Natural killer cell (primary cell): ENCODE measurements at regions of chr19 and their contacts with region 1.

Region 1: GRCh38 chr19:10403137-10404021 is at the start of gene CDC37:
- DNase-seq: peak; percentile 99
- ATAC-seq: peak; percentile 59 to 89 (median 71)
- H3K4me3 ChIP-seq: peak within 1 kb of the TSS; percentile 83
- H3K4me3 Mint-ChIP-seq: peak within 1 kb of the TSS; percentile 94
- H3K27ac ChIP-seq: peak within 1 kb of the TSS; percentile 90
- H3K27ac Mint-ChIP-seq: peak within 1 kb of the TSS; percentile 97 to 98
- H3K4me1 ChIP-seq: peaks cover 73% of the 10 kb centered on the region
- H3K4me1 Mint-ChIP-seq: peaks cover 60 to 77% of the 10 kb centered on the region in 2 donors
- H3K27me3 ChIP-seq: no peaks in the 10 kb centered on the region
- H3K27me3 Mint-ChIP-seq: no peaks in the 10 kb centered on the region
- CTCF ChIP-seq: no peak
- total RNA-seq, gene CDC37: 211 to 242 (median 223) TPM

Region 2: GRCh38 chr19:10416380-10417257 is 13.2 kb after region 1 on chr19:
- intact Hi-C with region 1: loop called (anchors 1 kb)
- DNase-seq: peak; percentile 99 to 100
- ATAC-seq: peak; percentile 66 to 89 (median 76)
- H3K4me3 ChIP-seq: peak overlapping the region; percentile 48
- H3K4me3 Mint-ChIP-seq: peak overlapping the region; percentile 92
- H3K27ac ChIP-seq: peak overlapping the region; percentile 72
- H3K27ac Mint-ChIP-seq: peak overlapping the region; percentile 95 to 96
- H3K4me1 ChIP-seq: peaks cover 78% of the 10 kb centered on the region
- H3K4me1 Mint-ChIP-seq: peaks cover 46 to 61% of the 10 kb centered on the region in 2 donors
- H3K27me3 ChIP-seq: peaks cover 36% of the 10 kb centered on the region
- H3K27me3 Mint-ChIP-seq: peaks cover 13 to 29% of the 10 kb centered on the region in 2 donors
- CTCF ChIP-seq: peak; percentile 100

Region 3: GRCh38 chr19:10431943-10432735 is 28.8 kb after region 1 on chr19:
- intact Hi-C with region 1: loop called (anchors 1 kb)
- DNase-seq: peak; percentile 73 to 85
- ATAC-seq: peak; percentile 32 to 49 (median 47)
- H3K4me3 ChIP-seq: peak overlapping the region; percentile 52
- H3K4me3 Mint-ChIP-seq: peak overlapping the region; percentile 95
- H3K27ac ChIP-seq: peak overlapping the region; percentile 94
- H3K27ac Mint-ChIP-seq: peak overlapping the region; percentile 95 to 96
- H3K4me1 ChIP-seq: peaks cover 56% of the 10 kb centered on the region
- H3K4me1 Mint-ChIP-seq: peaks cover 55 to 66% of the 10 kb centered on the region in 2 donors
- H3K27me3 ChIP-seq: no peaks in the 10 kb centered on the region
- H3K27me3 Mint-ChIP-seq: peaks cover 3 to 7% of the 10 kb centered on the region in 2 donors
- CTCF ChIP-seq: no peak

Region 4: GRCh38 chr19:10478903-10479384 is 75.6 kb after region 1 on chr19:
- intact Hi-C with region 1: loop called (anchors 5 kb)
- DNase-seq: peak; percentile 87 to 96
- ATAC-seq: peak; percentile 96 to 98 (median 97)
- H3K4me3 ChIP-seq: peak overlapping the region; percentile 8
- H3K4me3 Mint-ChIP-seq: peak overlapping the region; percentile 82
- H3K27ac ChIP-seq: no peak overlapping the region
- H3K27ac Mint-ChIP-seq: peak overlapping the region; percentile 85 to 92
- H3K4me1 ChIP-seq: peaks cover 21% of the 10 kb centered on the region
- H3K4me1 Mint-ChIP-seq: peaks cover 10% of the 10 kb centered on the region in 2 donors
- H3K27me3 ChIP-seq: no peaks in the 10 kb centered on the region
- H3K27me3 Mint-ChIP-seq: no peaks in the 10 kb centered on the region
- CTCF ChIP-seq: peak; percentile 85

Region 5: DNA sequence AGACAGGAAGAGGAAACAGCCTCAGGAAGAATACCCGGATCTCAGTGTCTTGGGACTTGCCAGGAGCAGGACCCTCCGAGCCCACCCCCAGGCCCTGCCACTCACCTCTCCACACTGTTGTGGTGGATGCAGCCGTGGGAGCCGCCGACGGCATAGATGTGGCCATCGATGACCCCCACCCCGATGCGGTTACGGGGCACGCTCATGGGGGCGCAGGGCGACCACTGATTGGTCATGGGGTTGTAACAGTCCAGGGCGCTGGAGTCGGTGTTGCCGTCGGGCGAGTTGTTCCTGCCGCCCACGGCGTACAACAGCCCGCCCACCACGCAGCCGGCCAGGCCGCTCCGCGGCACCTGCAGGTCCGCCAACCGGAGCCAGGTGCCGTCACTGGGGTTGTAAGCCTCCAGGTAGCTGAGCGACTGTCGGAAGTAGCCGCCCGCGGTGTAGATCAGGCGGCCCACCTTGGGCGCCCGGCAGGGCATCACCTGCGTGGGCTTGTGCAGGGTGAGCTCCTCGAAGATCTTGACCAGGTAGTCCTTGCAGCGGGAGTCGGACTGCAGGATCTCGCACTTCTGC is 88.2 kb after region 1 on chr19:
- intact Hi-C with region 1: no loop called
- DNase-seq: peak in 1 of 2 donors; percentile 7
- ATAC-seq: no peak
- H3K4me3 ChIP-seq: no peak overlapping the region
- H3K4me3 Mint-ChIP-seq: no peak overlapping the region
- H3K27ac ChIP-seq: no peak overlapping the region
- H3K27ac Mint-ChIP-seq: no peak overlapping the region
- H3K4me1 ChIP-seq: no peaks in the 10 kb centered on the region
- H3K4me1 Mint-ChIP-seq: peaks cover 0 to 4% of the 10 kb centered on the region in 2 donors
- H3K27me3 ChIP-seq: no peaks in the 10 kb centered on the region
- H3K27me3 Mint-ChIP-seq: no peaks in the 10 kb centered on the region
- CTCF ChIP-seq: no peak